GM12878 (cell line): ENCODE measurements at regions of chr11 and their contacts with region 1.

Region 1: GRCh38 chr11:18731949-18732821 is 6.2 kb upstream of the IGSF22 start:
- DNase-seq: peak; percentile 24
- ATAC-seq: peak; percentile 84
- H3K4me3 ChIP-seq: no peak overlapping the region
- H3K27ac ChIP-seq: no peak overlapping the region
- H3K4me1 ChIP-seq: peaks cover 8% of the 10 kb centered on the region
- H3K27me3 ChIP-seq: no peaks in the 10 kb centered on the region
- CTCF ChIP-seq: peak; percentile 89 to 99 (median 99)
- EP300 ChIP-seq: no peak
- POLR2A ChIP-seq: no peak
- RAD21 ChIP-seq: peak; percentile 89

Region 2: GRCh38 chr11:18540207-18541009 is 191.8 kb before region 1 on chr11:
- CTCF ChIA-PET with region 1: interaction called, 75 read pairs
- POLR2A ChIA-PET with region 1: no interaction called
- RAD21 ChIA-PET with region 1: interaction called, 31 read pairs
- SMC1A ChIA-PET with region 1: interaction called, 32 read pairs
- in situ Hi-C with region 1: no loop called
- intact Hi-C with region 1: loop called (anchors 1 kb)
- DNase-seq: no peak
- ATAC-seq: peak; percentile 84
- H3K4me3 ChIP-seq: no peak overlapping the region
- H3K27ac ChIP-seq: no peak overlapping the region
- H3K4me1 ChIP-seq: no peaks in the 10 kb centered on the region
- H3K27me3 ChIP-seq: no peaks in the 10 kb centered on the region
- CTCF ChIP-seq: peak; percentile 46 to 69 (median 56)
- EP300 ChIP-seq: no peak
- POLR2A ChIP-seq: no peak
- RAD21 ChIP-seq: peak; percentile 66

Region 3: DNA sequence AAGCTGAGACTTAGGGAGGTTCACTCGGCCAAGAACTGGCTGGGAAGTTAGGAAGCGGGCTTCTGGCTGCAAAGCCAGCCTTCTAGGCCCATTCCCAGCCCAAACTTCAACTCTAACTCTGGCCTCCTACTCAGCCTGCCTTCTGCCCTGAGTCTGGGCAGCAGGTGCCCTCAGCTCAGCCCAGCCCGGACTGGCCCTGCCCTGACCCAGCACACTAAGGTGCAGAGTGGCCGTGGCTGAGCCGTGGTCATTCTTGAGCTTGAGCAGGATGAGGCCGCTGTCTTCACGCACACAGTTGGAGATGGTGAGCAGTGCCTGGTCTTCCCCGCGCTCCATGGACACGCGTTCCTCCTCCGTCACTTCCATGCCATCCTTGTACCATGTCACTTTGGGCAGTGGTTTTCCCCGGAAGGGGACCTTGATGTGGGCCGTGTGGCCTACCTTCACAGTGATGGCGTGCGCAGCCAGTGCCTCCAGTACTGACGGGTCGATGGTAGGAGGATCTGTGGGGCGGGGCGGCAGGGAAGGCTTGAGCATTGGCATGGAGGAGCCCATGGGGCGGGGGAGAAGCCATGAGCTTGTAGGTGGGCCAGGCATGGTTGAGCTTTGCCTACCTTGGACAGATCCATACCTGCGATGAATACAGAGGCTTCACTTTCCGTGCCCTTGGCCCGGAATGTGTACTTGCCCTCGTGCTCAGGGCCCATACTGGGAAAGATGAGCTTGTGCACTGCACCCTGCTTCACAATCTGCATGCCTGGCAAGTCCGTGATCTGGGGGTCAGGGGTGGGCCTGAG is 18.3 kb before region 1 on chr11:
- CTCF ChIA-PET with region 1: interaction called, 109 read pairs
- POLR2A ChIA-PET with region 1: no interaction called
- RAD21 ChIA-PET with region 1: interaction called, 3 read pairs
- SMC1A ChIA-PET with region 1: interaction called, 4 read pairs
- in situ Hi-C with region 1: no loop called
- intact Hi-C with region 1: no loop called
- DNase-seq: no peak
- ATAC-seq: no peak
- H3K4me3 ChIP-seq: no peak overlapping the region
- H3K27ac ChIP-seq: no peak overlapping the region
- H3K4me1 ChIP-seq: 0 out of 2 replicates have a peak, but pooled peaks cover 3% of the 10 kb centered on the region
- H3K27me3 ChIP-seq: no peaks in the 10 kb centered on the region; a peak in 2 of 4 replicates
- CTCF ChIP-seq: no peak
- EP300 ChIP-seq: no peak
- POLR2A ChIP-seq: no peak
- RAD21 ChIP-seq: no peak

Region 4: GRCh38 chr11:18749697-18750319 is 17.6 kb after region 1 on chr11:
- CTCF ChIA-PET with region 1: interaction called, 494 read pairs
- POLR2A ChIA-PET with region 1: no interaction called
- RAD21 ChIA-PET with region 1: interaction called, 5 read pairs
- SMC1A ChIA-PET with region 1: interaction called, 4 read pairs
- in situ Hi-C with region 1: no loop called
- intact Hi-C with region 1: no loop called
- DNase-seq: no peak
- ATAC-seq: no peak; the same call in 2 of the 3 replicates
- H3K4me3 ChIP-seq: no peak overlapping the region
- H3K27ac ChIP-seq: no peak overlapping the region
- H3K4me1 ChIP-seq: no peaks in the 10 kb centered on the region
- H3K27me3 ChIP-seq: no peaks in the 10 kb centered on the region; a peak in 1 of 4 replicates
- CTCF ChIP-seq: no peak
- EP300 ChIP-seq: no peak
- POLR2A ChIP-seq: no peak
- RAD21 ChIP-seq: no peak

Region 5: GRCh38 chr11:18768472-18768901 is 36.3 kb after region 1 on chr11:
- CTCF ChIA-PET with region 1: interaction called, 494 read pairs
- POLR2A ChIA-PET with region 1: interaction called, 4 read pairs
- RAD21 ChIA-PET with region 1: interaction called, 26 read pairs
- SMC1A ChIA-PET with region 1: interaction called, 34 read pairs
- in situ Hi-C with region 1: no loop called
- intact Hi-C with region 1: loop called (anchors 1 kb)
- DNase-seq: peak; percentile 77
- ATAC-seq: peak; percentile 80
- H3K4me3 ChIP-seq: no peak overlapping the region
- H3K27ac ChIP-seq: peak overlapping the region; percentile 35
- H3K4me1 ChIP-seq: peaks cover 38% of the 10 kb centered on the region
- H3K27me3 ChIP-seq: no peaks in the 10 kb centered on the region
- CTCF ChIP-seq: no peak
- EP300 ChIP-seq: peak; percentile 92 to 94
- POLR2A ChIP-seq: no peak
- RAD21 ChIP-seq: no peak

Region 6: GRCh38 chr11:18791207-18791968 is 59.2 kb after region 1 on chr11 and contains the start of gene PTPN5:
- CTCF ChIA-PET with region 1: interaction called, 4 read pairs
- POLR2A ChIA-PET with region 1: no interaction called
- RAD21 ChIA-PET with region 1: interaction called, 4 read pairs
- SMC1A ChIA-PET with region 1: no interaction called
- in situ Hi-C with region 1: loop called (anchors 10 kb)
- intact Hi-C with region 1: no loop called
- DNase-seq: no peak
- ATAC-seq: peak; percentile 32; the same call in 2 of the 3 replicates
- H3K4me3 ChIP-seq: no peak within 1 kb of the TSS
- H3K27ac ChIP-seq: no peak within 1 kb of the TSS
- H3K4me1 ChIP-seq: no peaks in the 10 kb centered on the region
- H3K27me3 ChIP-seq: peaks cover 9 to 15% of the 10 kb centered on the region in 2 experiments
- CTCF ChIP-seq: no peak
- EP300 ChIP-seq: no peak
- POLR2A ChIP-seq: no peak
- RAD21 ChIP-seq: no peak
- polyA plus RNA-seq, gene PTPN5: not detected

Region 7: DNA sequence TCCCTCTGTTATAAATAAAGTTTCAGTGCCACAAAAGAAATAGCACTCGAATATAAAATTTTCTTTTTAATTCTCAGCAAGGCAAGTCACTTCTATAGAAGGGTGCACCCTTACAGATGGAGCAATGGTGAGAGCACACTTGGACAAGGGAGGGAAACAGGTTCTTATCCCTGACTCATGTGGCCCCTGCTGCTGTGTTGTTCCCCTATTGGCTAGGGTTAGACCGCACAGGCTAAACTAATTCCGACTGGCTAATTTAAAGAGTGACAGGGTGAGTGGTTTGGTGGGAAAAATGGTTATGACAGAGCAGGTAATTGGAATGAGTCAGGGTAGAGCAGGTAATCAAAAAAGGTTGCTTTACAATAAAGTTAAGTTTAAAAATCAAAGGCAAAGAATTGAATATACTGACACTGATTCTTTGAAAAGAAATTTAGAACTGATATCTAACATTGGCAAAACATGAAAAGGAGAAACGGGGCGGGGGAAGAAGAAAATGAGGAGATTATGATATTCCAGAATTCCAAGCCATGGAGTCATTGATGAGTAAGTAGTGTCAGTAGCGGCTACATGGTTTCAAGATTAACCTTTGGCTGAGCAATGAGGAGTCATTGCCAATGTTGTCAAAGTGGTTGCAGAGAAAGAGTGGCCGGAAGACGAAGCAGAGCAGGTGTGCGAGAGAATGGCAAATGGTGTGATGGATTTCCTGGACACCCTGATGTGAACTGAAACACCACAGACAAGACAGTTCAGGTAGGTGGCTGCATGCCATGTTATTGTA is 255.5 kb after region 1 on chr11:
- CTCF ChIA-PET with region 1: no interaction called
- POLR2A ChIA-PET with region 1: no interaction called
- RAD21 ChIA-PET with region 1: no interaction called
- SMC1A ChIA-PET with region 1: no interaction called
- in situ Hi-C with region 1: no loop called
- intact Hi-C with region 1: no loop called
- DNase-seq: no peak
- ATAC-seq: no peak
- H3K4me3 ChIP-seq: no peak overlapping the region
- H3K27ac ChIP-seq: no peak overlapping the region
- H3K4me1 ChIP-seq: no peaks in the 10 kb centered on the region
- H3K27me3 ChIP-seq: no peaks in the 10 kb centered on the region; a peak in 1 of 4 replicates
- CTCF ChIP-seq: no peak
- EP300 ChIP-seq: no peak
- POLR2A ChIP-seq: no peak
- RAD21 ChIP-seq: no peak